K562 (cell line): ENCODE measurements at regions of chr17 and their contacts with region 1.

Region 1: DNA sequence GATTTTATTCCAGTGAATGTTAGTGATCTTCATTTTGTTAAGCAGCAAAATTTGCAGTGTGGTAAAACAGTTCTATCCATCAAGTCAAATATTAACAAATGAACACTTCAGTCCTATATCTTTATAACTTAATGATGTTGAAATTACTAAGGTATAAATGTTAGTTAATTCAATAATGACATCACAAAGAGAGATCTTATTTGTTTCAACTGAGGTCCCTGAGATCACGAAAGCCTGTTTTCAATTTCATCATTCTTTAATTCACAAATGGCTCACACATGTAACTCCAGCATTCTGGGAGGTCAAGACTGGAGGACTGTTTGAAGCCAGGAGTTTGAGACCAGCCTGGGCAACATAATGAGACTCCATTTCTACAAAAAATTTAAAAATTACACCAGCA is 13.9 kb downstream of the SMURF2 start:
- DNase-seq: no peak
- ATAC-seq: no peak
- H3K4me3 ChIP-seq: no peak overlapping the region
- H3K27ac ChIP-seq: no peak overlapping the region
- H3K4me1 ChIP-seq: peaks cover 0 to 5% of the 10 kb centered on the region in 2 experiments; a peak in 2 of 5 replicates
- H3K27me3 ChIP-seq: no peaks in the 10 kb centered on the region
- CTCF ChIP-seq: no peak
- EP300 ChIP-seq: no peak
- POLR2A ChIP-seq: no peak
- RAD21 ChIP-seq: no peak

Region 2: DNA sequence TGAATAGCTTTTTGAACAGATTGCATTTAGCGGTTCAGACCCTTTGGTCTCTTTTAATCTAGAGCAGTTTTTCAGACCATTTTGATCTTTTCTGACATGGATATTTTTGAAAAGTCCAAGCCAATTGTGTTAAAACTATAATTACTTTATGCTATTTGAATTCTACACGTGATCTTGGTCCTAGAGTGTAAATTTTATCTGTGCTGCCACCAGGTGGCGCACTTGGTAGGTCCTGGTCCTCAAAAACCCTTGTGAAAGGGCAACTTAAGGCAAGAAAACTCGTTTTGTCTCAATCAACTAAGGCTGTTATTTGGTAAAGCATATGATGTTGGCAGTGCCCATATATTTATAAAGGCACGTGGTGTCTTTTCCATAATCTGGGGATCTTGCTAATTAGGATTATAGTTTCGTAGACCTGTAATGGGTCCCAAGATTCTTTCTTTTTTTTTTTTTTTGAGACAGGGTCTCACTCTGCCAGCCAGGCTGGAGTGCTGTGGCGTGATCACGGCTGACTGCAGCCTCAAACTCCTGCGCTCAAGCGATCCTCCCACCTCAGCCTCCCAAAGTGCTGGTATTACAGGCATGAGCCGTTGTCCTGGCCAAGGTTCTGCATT is 341.3 kb before region 1 on chr17:
- CTCF ChIA-PET with region 1: no interaction called
- POLR2A ChIA-PET with region 1: no interaction called
- in situ Hi-C with region 1: no loop called
- intact Hi-C with region 1: loop called (anchors 5 kb)
- DNase-seq: peak; percentile 67 to 84 (median 69)
- ATAC-seq: peak; percentile 79
- H3K4me3 ChIP-seq: no peak overlapping the region
- H3K27ac ChIP-seq: no peak overlapping the region
- H3K4me1 ChIP-seq: no peaks in the 10 kb centered on the region; a peak in 2 of 5 replicates
- H3K27me3 ChIP-seq: peaks cover 0 to 6% of the 10 kb centered on the region in 2 experiments; a peak in 2 of 5 replicates
- CTCF ChIP-seq: peak; percentile 73 to 85 (median 79)
- EP300 ChIP-seq: no peak
- POLR2A ChIP-seq: no peak
- RAD21 ChIP-seq: peak; percentile 68 to 86

Region 3: GRCh38 chr17:64496786-64497564 is 151.3 kb before region 1 on chr17 and contains the start of gene POLG2:
- CTCF ChIA-PET with region 1: interaction called, 8 read pairs
- POLR2A ChIA-PET with region 1: interaction called, 14 read pairs
- in situ Hi-C with region 1: no loop called
- intact Hi-C with region 1: loop called (anchors 1 kb)
- DNase-seq: peak; percentile 90 to 96 (median 93)
- ATAC-seq: peak; percentile 86
- H3K4me3 ChIP-seq: peak within 1 kb of the TSS; percentile 69
- H3K27ac ChIP-seq: peak within 1 kb of the TSS; percentile 90
- H3K4me1 ChIP-seq: peaks cover 4 to 10% of the 10 kb centered on the region in 2 experiments; a peak in 3 of 5 replicates
- H3K27me3 ChIP-seq: no peaks in the 10 kb centered on the region
- CTCF ChIP-seq: peak; percentile 66 to 84 (median 69)
- EP300 ChIP-seq: peak; percentile 7
- POLR2A ChIP-seq: peak; percentile 94
- RAD21 ChIP-seq: peak; percentile 67 to 73
- polyA plus RNA-seq, gene POLG2: 13.4 to 14.6 TPM

Region 4: GRCh38 chr17:64534175-64534574 is 114.1 kb before region 1 on chr17:
- CTCF ChIA-PET with region 1: no interaction called
- POLR2A ChIA-PET with region 1: interaction called, 3 read pairs
- in situ Hi-C with region 1: loop called (anchors 5 kb)
- intact Hi-C with region 1: loop called (anchors 10 kb)
- DNase-seq: peak in 2 of 4 experiments; percentile 20 to 22
- ATAC-seq: peak; percentile 4; the same call in 1 of the 3 replicates
- H3K4me3 ChIP-seq: no peak overlapping the region
- H3K27ac ChIP-seq: no peak overlapping the region
- H3K4me1 ChIP-seq: peaks cover 0 to 19% of the 10 kb centered on the region in 2 experiments; a peak in 3 of 5 replicates
- H3K27me3 ChIP-seq: no peaks in the 10 kb centered on the region
- CTCF ChIP-seq: 0 out of 6 replicates have a peak, but pooled peaks have one; percentile 10 to 12 (median 12)
- EP300 ChIP-seq: no peak
- POLR2A ChIP-seq: no peak
- RAD21 ChIP-seq: no peak

Region 5: GRCh38 chr17:64599187-64599676 is 49.0 kb before region 1 on chr17:
- CTCF ChIA-PET with region 1: no interaction called
- POLR2A ChIA-PET with region 1: no interaction called
- in situ Hi-C with region 1: no loop called
- intact Hi-C with region 1: loop called (anchors 2 kb)
- DNase-seq: peak; percentile 30 to 88 (median 54)
- ATAC-seq: peak; percentile 98
- H3K4me3 ChIP-seq: peak overlapping the region; percentile 29
- H3K27ac ChIP-seq: peak overlapping the region; percentile 84
- H3K4me1 ChIP-seq: peaks cover 5 to 9% of the 10 kb centered on the region in 2 experiments; a peak in 4 of 5 replicates
- H3K27me3 ChIP-seq: no peaks in the 10 kb centered on the region
- CTCF ChIP-seq: no peak
- EP300 ChIP-seq: no peak
- POLR2A ChIP-seq: peak; percentile 82
- RAD21 ChIP-seq: no peak

Region 6: DNA sequence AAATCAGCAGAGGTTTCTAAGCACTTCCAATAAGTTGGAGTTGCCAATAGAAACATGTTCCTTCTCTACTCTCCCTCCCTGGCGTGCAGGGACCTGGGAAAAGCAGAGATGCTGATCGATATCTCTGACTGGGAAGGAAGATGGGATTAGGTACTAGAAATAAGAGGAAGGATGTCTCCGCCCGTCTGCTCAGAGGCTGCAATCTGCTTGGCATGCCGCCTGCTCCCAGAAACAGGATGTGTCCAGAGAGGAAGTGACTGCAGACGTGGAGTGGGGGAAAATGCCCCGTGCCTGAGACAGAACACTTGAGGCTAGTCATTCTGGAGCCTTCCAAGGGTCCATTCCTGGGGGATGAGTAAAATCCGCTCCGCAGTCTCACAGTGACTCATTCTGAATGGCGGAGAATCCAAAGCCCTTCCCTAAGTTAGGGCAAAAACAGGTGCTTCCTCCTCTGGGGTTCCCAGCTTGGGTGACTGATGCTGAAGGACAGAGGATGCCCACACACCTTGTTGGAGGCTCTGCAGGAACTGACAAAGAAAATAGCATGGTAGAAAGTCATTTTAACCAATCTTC is 58.9 kb after region 1 on chr17:
- CTCF ChIA-PET with region 1: no interaction called
- POLR2A ChIA-PET with region 1: no interaction called
- in situ Hi-C with region 1: no loop called
- intact Hi-C with region 1: no loop called
- DNase-seq: no peak
- ATAC-seq: no peak
- H3K4me3 ChIP-seq: no peak overlapping the region
- H3K27ac ChIP-seq: no peak overlapping the region
- H3K4me1 ChIP-seq: peaks cover 8 to 15% of the 10 kb centered on the region in 2 experiments; a peak in 4 of 5 replicates
- H3K27me3 ChIP-seq: peaks cover 0 to 6% of the 10 kb centered on the region in 2 experiments; a peak in 2 of 5 replicates
- CTCF ChIP-seq: no peak
- EP300 ChIP-seq: no peak
- POLR2A ChIP-seq: no peak
- RAD21 ChIP-seq: no peak

Region 7: DNA sequence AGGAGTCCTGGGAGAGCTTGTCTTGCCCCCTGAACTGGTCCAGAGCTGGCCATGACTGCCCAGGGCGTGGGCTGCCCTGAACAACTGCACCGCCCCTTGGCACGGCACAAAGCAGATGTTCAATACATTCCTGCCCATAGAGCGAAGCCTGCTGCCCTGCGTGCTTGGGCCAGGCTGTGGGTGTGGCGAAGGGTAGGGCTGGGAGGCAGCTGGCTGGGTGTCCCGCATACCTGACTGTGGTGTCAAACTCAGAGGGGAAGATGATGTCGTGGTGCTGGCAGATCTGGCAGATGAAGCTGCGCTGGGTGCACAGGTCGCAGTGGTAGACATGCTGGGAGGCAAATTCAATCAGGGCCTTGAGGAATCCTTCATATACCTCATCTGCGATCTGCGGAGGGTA is 138.1 kb after region 1 on chr17:
- CTCF ChIA-PET with region 1: no interaction called
- POLR2A ChIA-PET with region 1: no interaction called
- in situ Hi-C with region 1: no loop called
- intact Hi-C with region 1: no loop called
- DNase-seq: no peak
- ATAC-seq: no peak
- H3K4me3 ChIP-seq: no peak overlapping the region
- H3K27ac ChIP-seq: no peak overlapping the region
- H3K4me1 ChIP-seq: no peaks in the 10 kb centered on the region
- H3K27me3 ChIP-seq: no peaks in the 10 kb centered on the region
- CTCF ChIP-seq: no peak
- EP300 ChIP-seq: no peak
- POLR2A ChIP-seq: no peak
- RAD21 ChIP-seq: no peak